ENCODE measurements at regions of chr3 and their contacts with region 1.

Region 1: DNA sequence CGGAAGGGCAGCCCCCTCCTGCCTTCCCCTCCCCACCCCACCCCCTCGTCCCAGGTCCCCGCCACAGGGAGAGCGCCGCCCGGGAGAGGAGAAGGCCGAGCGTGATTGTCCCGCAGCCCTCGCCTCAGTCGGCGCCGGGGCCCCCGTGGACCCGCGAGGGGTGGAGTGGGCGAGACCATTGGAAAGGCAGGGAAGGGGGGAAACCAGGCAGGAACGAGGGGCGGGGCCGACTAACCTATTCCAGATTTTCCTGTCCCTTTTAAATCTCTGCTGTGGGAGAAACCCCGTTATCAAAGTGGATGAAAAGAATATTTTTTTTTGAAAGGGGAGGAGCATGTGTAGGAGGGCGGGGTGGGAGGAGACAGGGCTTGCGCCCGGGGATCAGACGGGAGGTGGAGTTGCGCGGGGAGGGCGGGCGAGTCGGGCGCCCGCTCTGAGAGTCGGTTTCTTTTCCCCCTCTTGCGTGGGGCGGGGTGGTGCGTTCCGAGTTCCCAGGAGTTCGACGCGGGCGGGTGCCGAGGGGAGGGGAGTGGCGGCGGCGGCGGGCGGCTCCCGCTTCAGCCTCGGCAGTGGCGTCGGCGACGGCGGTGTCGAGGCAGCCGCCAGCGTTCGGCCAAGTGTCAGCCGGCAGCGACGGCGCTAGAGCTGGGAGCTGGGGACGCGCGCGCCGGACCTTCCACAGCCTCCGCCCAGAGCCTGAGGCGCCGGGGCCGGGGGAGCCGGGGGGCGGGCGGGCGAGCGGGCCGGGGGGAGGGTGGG is at the start of gene NECTIN3:
- DNase-seq: peak; percentile 96
- ATAC-seq: peak; percentile 78
- H3K4me3 ChIP-seq: peak within 1 kb of the TSS; percentile 99
- H3K27ac ChIP-seq: peak within 1 kb of the TSS; percentile 52
- H3K4me1 ChIP-seq: peaks cover 16% of the 10 kb centered on the region
- H3K27me3 ChIP-seq: no peaks in the 10 kb centered on the region
- CTCF ChIP-seq: no peak
- total RNA-seq, gene NECTIN3: 12.8 and 15.8 TPM in 2 replicates

Region 2: GRCh38 chr3:110314512-110315114 is 756.8 kb before region 1 on chr3:
- CTCF ChIA-PET with region 1: no interaction called
- POLR2A ChIA-PET with region 1: no interaction called
- intact Hi-C with region 1: loop called (anchors 2 kb)
- DNase-seq: peak; percentile 88
- ATAC-seq: peak; percentile 80
- H3K4me3 ChIP-seq: no peak overlapping the region
- H3K27ac ChIP-seq: no peak overlapping the region
- H3K4me1 ChIP-seq: peaks cover 10% of the 10 kb centered on the region
- H3K27me3 ChIP-seq: no peaks in the 10 kb centered on the region
- CTCF ChIP-seq: peak; percentile 90

Region 3: GRCh38 chr3:110526777-110527727 is 544.4 kb before region 1 on chr3:
- CTCF ChIA-PET with region 1: no interaction called
- POLR2A ChIA-PET with region 1: no interaction called
- intact Hi-C with region 1: loop called (anchors 5 kb)
- DNase-seq: peak; percentile 92
- ATAC-seq: peak; percentile 96
- H3K4me3 ChIP-seq: peak overlapping the region; percentile 18; the same call in 1 of the 2 replicates
- H3K27ac ChIP-seq: peak overlapping the region; percentile 36
- H3K4me1 ChIP-seq: peaks cover 26% of the 10 kb centered on the region
- H3K27me3 ChIP-seq: no peaks in the 10 kb centered on the region
- CTCF ChIP-seq: no peak

Region 4: GRCh38 chr3:110743202-110743601 is 328.2 kb before region 1 on chr3:
- CTCF ChIA-PET with region 1: no interaction called
- POLR2A ChIA-PET with region 1: no interaction called
- intact Hi-C with region 1: loop called (anchors 10 kb)
- DNase-seq: no peak
- ATAC-seq: peak; percentile 78
- H3K4me3 ChIP-seq: no peak overlapping the region
- H3K27ac ChIP-seq: no peak overlapping the region
- H3K4me1 ChIP-seq: peaks cover 4% of the 10 kb centered on the region; the same call in 1 of the 2 replicates
- H3K27me3 ChIP-seq: no peaks in the 10 kb centered on the region
- CTCF ChIP-seq: no peak

Region 5: DNA sequence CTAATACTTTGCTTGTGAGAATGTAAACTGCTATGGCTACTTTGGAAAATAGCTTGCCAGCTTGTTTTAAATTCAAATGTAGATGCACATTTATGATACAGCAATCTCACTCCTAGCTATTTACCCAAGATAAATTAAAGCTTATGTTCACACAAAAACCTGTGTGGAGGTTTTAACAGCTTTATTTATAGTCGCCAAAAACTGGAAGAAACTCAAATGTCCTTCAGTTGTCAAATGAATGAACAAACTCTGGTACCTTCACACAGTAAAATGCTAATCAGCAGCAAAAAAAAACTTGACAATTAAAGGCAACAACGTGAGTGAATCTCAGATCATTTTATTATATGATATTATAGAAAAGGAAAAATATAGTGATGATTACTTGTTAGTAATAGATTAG is 248.5 kb before region 1 on chr3:
- CTCF ChIA-PET with region 1: no interaction called
- POLR2A ChIA-PET with region 1: no interaction called
- intact Hi-C with region 1: no loop called
- DNase-seq: no peak
- ATAC-seq: no peak
- H3K4me3 ChIP-seq: no peak overlapping the region
- H3K27ac ChIP-seq: no peak overlapping the region
- H3K4me1 ChIP-seq: peaks cover 8% of the 10 kb centered on the region; the same call in 1 of the 2 replicates
- H3K27me3 ChIP-seq: no peaks in the 10 kb centered on the region
- CTCF ChIP-seq: no peak

Region 6: GRCh38 chr3:110881068-110881467 is 190.4 kb before region 1 on chr3:
- CTCF ChIA-PET with region 1: no interaction called
- POLR2A ChIA-PET with region 1: no interaction called
- intact Hi-C with region 1: loop called (anchors 5 kb)
- DNase-seq: peak; percentile 64
- ATAC-seq: peak; percentile 35; the same call in 1 of the 2 replicates
- H3K4me3 ChIP-seq: no peak overlapping the region
- H3K27ac ChIP-seq: no peak overlapping the region
- H3K4me1 ChIP-seq: peaks cover 4% of the 10 kb centered on the region; the same call in 1 of the 2 replicates
- H3K27me3 ChIP-seq: no peaks in the 10 kb centered on the region
- CTCF ChIP-seq: peak; percentile 41; the same call in 1 of the 2 replicates

Region 7: GRCh38 chr3:111012388-111013248 is 58.8 kb before region 1 on chr3:
- CTCF ChIA-PET with region 1: no interaction called
- POLR2A ChIA-PET with region 1: no interaction called
- intact Hi-C with region 1: loop called (anchors 5 kb)
- DNase-seq: peak; percentile 60
- ATAC-seq: peak; percentile 98
- H3K4me3 ChIP-seq: no peak overlapping the region
- H3K27ac ChIP-seq: no peak overlapping the region
- H3K4me1 ChIP-seq: no peaks in the 10 kb centered on the region
- H3K27me3 ChIP-seq: no peaks in the 10 kb centered on the region
- CTCF ChIP-seq: peak; percentile 66